SK-N-SH (cell line): ENCODE measurements at regions of chr22 and their contacts with region 1.

Region 1: GRCh38 chr22:21938071-21938822 is 14.4 kb downstream of the PPM1F start:
- DNase-seq: peak; percentile 96
- H3K4me3 ChIP-seq: peak overlapping the region; percentile 51 to 52
- H3K27ac ChIP-seq: peak overlapping the region; percentile 89 to 95
- H3K4me1 ChIP-seq: peaks cover 23 to 39% of the 10 kb centered on the region in 2 experiments; a peak in 3 of 4 replicates
- H3K27me3 ChIP-seq: no peaks in the 10 kb centered on the region
- CTCF ChIP-seq: peak; percentile 84
- EP300 ChIP-seq: no peak
- RAD21 ChIP-seq: peak; percentile 88

Region 2: GRCh38 chr22:21681566-21682370 is 256.5 kb before region 1 on chr22:
- CTCF ChIA-PET with region 1: interaction called, 10 read pairs
- POLR2A ChIA-PET with region 1: no interaction called
- DNase-seq: no peak
- H3K4me3 ChIP-seq: no peak overlapping the region
- H3K27ac ChIP-seq: no peak overlapping the region; a peak in 1 of 4 replicates
- H3K4me1 ChIP-seq: no peaks in the 10 kb centered on the region; a peak in 1 of 4 replicates
- H3K27me3 ChIP-seq: no peaks in the 10 kb centered on the region
- CTCF ChIP-seq: no peak
- EP300 ChIP-seq: no peak
- RAD21 ChIP-seq: no peak

Region 3: DNA sequence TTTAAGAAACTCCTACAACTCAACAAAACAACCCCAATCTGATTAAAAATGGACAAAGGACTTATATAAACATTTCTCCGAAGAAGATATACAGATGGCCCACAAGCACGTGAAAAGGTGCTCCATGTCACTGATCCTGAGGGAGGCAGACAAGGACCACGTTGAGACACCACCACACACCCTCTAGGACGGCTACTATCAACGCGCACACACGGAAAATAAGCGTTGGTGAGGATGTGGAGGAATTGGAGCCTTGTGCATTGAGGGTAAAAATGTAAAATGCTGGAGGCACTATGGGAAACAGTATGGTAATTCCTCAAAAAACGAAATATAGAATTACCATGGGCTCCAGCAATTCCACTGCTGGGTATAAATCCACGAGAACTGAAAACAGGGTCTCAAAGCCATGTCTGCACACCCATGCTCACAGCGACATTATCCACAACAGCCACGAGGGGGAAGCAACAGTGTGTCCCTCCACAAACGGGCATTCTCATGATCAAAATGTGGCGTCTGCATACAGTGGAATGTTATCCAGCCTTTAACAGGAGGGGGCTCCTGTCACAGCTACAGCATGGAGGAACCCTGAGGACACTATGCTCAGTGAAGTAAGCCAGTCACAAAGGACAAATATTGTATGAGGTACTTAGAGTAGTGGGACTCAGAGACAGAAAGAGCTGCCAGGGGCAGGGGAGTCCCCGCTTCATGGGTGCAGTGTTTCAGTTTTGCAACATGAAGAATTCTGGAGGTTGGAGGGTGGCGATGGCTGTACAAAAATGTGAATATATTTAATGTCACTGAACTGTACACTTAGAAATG is 225.1 kb before region 1 on chr22:
- CTCF ChIA-PET with region 1: interaction called, 90 read pairs
- POLR2A ChIA-PET with region 1: no interaction called
- DNase-seq: peak; percentile 88
- H3K4me3 ChIP-seq: no peak overlapping the region
- H3K27ac ChIP-seq: no peak overlapping the region
- H3K4me1 ChIP-seq: peaks cover 0 to 12% of the 10 kb centered on the region in 2 experiments; a peak in 1 of 4 replicates
- H3K27me3 ChIP-seq: no peaks in the 10 kb centered on the region
- CTCF ChIP-seq: peak; percentile 83
- EP300 ChIP-seq: no peak
- RAD21 ChIP-seq: peak; percentile 83

Region 4: DNA sequence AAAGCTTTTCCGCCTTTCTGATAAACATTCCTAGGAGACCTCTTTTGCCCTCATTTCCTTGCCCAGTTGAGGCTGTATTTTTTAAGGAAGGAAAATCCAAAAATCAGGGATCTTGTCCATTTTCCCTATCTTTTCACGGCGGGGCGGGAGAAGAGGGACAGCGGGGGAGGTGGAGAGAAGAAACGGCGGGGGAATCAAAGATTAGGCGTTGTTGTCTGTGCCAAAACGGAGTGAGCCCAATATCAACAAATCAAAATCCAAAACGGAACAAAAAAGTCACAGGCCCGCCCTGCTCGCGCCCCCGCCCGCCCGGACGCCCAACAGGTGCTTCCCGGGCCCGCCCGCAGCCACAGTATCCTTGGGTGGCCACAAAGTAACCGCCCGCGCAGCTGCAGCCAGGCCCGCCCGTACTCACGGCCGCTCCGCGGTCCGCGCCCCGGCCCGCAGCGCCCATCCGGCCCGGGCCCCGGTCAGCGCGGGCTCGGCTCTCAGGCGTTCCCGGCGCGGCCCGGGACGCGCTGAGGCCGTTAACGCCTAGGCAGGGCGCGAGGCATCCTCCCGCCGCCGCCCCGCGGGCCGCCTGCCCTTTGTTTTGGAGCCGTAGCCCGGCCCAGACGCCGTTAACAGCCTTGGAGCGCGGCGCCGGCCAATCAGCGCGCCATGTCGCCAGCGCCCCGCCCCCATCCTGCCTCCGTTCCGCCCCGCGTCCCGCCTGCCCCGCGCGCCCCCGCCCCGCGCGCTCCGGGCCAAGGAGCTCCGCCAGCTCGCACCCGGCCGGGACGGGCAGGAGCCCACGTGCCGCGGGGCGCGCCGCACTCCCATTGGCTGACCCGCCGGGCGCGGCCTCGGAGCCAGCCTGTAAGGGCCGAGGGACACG is 202.8 kb before region 1 on chr22 and contains the start of gene YPEL1:
- CTCF ChIA-PET with region 1: interaction called, 17 read pairs
- POLR2A ChIA-PET with region 1: interaction called, 8 read pairs
- DNase-seq: peak; percentile 100
- H3K4me3 ChIP-seq: peak within 1 kb of the TSS; percentile 58 to 85
- H3K27ac ChIP-seq: peak within 1 kb of the TSS in 1 of 2 experiments; percentile 79; a peak in 3 of 4 replicates
- H3K4me1 ChIP-seq: peaks cover 0 to 8% of the 10 kb centered on the region in 2 experiments; a peak in 1 of 4 replicates
- H3K27me3 ChIP-seq: no peaks in the 10 kb centered on the region
- CTCF ChIP-seq: no peak
- EP300 ChIP-seq: no peak
- RAD21 ChIP-seq: no peak
- polyA plus RNA-seq, gene YPEL1: 2.4 and 2.7 TPM in 2 replicates

Region 5: DNA sequence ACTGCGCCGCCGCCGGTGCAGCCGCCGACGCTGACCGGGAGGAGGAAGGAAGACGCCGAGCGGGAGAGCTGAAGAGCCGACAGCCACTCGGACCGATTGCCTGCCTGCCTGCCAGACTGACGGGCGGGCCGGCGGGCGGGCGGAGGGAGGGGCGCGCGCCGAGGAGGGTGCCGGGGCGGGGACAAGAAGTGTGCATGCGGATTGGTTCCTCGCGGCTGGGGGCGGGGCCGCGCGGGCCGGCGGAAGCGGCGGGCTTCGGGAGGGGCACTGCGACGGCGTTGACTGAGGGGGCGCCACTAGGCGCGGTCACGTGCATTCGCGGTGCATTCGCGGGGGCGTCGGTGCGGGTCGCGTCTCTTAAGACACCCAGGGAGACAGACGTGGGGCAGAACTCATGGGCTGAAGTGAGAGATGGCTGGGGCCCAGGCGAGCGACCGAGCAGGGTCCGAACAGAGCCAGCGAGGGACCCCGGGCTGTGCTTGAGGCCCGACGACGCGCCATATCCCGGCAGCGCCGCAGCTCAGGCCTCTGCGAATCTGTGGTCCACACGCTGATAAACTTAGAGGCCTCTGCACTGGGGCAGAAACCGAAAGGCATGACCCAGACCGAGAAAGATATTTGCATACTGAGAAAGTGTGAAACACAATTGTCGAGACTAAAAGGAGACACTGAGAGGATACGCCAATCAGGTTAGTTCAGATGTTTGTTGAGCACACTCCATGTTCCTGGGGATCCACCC is 70.5 kb before region 1 on chr22 and contains the start of gene MAPK1:
- CTCF ChIA-PET with region 1: interaction called, 30 read pairs
- POLR2A ChIA-PET with region 1: no interaction called
- DNase-seq: peak; percentile 98
- H3K4me3 ChIP-seq: peak within 1 kb of the TSS; percentile 84 to 93
- H3K27ac ChIP-seq: peak within 1 kb of the TSS; percentile 70 to 74; a peak in 3 of 4 replicates
- H3K4me1 ChIP-seq: peaks cover 14 to 16% of the 10 kb centered on the region in 2 experiments; a peak in 3 of 4 replicates
- H3K27me3 ChIP-seq: no peaks in the 10 kb centered on the region
- CTCF ChIP-seq: peak; percentile 48
- EP300 ChIP-seq: no peak
- RAD21 ChIP-seq: no peak
- polyA plus RNA-seq, gene MAPK1: 25.6 and 34.8 TPM in 2 replicates

Region 6: GRCh38 chr22:21952586-21953571 is 14.6 kb after region 1 on chr22 and contains the start of gene PPM1F:
- CTCF ChIA-PET with region 1: interaction called, 173 read pairs
- POLR2A ChIA-PET with region 1: interaction called, 10 read pairs
- DNase-seq: peak; percentile 99
- H3K4me3 ChIP-seq: peak within 1 kb of the TSS; percentile 67 to 69
- H3K27ac ChIP-seq: peak within 1 kb of the TSS in 1 of 2 experiments; percentile 79; a peak in 2 of 4 replicates
- H3K4me1 ChIP-seq: peaks cover 2 to 22% of the 10 kb centered on the region in 2 experiments; a peak in 2 of 4 replicates
- H3K27me3 ChIP-seq: no peaks in the 10 kb centered on the region
- CTCF ChIP-seq: peak; percentile 79
- EP300 ChIP-seq: no peak
- RAD21 ChIP-seq: peak; percentile 64
- polyA plus RNA-seq, gene PPM1F: 29.6 and 33.8 TPM in 2 replicates